WTC11 (cell line): ENCODE measurements at regions of chr19 and their contacts with region 1.

Region 1: DNA sequence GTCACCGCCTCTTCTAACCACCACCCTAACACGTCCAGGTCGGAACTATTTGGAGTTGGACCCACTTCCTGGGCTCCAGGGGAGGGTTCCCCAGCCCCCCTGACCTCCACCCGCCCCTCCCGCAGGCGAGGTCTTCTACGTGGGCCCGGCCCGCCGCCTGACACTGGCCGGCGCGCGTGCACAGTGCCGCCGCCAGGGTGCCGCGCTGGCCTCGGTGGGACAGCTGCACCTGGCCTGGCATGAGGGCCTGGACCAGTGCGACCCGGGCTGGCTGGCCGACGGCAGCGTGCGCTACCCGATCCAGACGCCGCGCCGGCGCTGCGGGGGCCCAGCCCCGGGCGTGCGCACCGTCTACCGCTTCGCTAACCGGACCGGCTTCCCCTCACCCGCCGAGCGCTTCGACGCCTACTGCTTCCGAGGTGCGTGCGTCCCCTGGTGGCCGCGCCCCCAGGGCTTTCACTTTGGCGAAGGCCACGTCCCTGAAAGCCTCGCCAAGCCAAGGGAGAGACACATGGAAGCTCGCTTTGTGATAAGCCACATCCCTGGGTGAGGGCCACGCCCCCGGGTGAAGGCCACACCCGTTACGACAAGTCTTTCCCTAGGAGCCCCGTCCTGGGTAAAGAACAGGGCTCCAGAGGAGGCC is 13.2 kb downstream of the NCAN start:
- DNase-seq: peak; percentile 90
- ATAC-seq: peak; percentile 86
- H3K4me3 Mint-ChIP-seq: peak overlapping the region; percentile 65
- H3K27ac Mint-ChIP-seq: no peak overlapping the region
- H3K4me1 Mint-ChIP-seq: peaks cover 2% of the 10 kb centered on the region
- H3K27me3 Mint-ChIP-seq: peaks cover 46% of the 10 kb centered on the region
- CTCF ChIP-seq: 0 out of 2 replicates have a peak, but pooled peaks have one; percentile 35

Region 2: DNA sequence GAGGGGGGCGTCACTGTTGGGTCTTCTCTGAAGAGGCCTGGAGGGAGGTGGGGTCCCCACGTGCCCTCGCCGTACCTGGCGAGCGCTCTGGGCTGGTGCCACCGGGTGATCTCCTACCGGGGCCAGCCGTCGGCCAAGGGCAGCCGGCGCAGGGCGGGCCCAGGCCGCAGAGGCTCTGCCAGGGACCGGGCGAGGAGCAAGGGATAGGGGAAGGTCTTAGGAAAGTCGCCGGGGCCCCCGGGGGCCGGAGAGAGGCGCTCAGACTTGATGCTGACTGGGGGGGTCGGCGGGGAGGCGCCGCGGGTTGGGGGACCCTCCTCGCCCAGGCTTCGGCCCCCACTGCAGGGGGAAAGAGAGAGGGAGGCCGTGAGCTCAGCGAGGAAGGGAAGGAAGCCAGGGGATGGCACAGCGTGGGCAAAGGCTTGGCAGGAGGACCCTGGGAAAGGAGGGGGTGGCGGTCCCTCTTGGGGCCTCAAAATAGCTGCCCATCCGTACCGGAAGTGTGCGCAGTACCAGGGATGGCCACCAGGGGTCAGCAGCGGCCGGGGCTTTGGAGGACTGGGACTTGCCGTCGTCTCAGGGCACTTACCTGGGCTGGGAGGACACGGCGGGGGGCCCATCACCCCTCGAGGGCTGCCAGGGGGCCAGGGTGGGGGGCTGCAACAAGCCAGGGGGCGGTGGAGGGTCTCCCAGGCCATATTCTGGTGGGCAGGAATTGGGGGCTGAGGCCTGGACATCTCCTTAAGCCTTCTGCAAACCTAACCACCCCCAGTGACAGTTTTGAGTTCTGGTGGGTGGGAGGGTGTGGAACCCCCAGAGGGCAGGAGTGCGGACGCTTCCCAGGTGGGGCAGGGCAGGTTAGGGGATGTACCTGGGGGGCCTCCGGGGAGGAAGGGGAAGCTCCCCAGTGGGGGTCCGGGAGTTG is 79.0 kb before region 1 on chr19:
- CTCF ChIA-PET with region 1: interaction called, 13 read pairs
- POLR2A ChIA-PET with region 1: no interaction called
- DNase-seq: peak; percentile 94
- ATAC-seq: peak; percentile 83
- H3K4me3 Mint-ChIP-seq: no peak overlapping the region
- H3K27ac Mint-ChIP-seq: no peak overlapping the region
- H3K4me1 Mint-ChIP-seq: no peaks in the 10 kb centered on the region
- H3K27me3 Mint-ChIP-seq: peaks cover 31% of the 10 kb centered on the region
- CTCF ChIP-seq: peak; percentile 98

Region 3: DNA sequence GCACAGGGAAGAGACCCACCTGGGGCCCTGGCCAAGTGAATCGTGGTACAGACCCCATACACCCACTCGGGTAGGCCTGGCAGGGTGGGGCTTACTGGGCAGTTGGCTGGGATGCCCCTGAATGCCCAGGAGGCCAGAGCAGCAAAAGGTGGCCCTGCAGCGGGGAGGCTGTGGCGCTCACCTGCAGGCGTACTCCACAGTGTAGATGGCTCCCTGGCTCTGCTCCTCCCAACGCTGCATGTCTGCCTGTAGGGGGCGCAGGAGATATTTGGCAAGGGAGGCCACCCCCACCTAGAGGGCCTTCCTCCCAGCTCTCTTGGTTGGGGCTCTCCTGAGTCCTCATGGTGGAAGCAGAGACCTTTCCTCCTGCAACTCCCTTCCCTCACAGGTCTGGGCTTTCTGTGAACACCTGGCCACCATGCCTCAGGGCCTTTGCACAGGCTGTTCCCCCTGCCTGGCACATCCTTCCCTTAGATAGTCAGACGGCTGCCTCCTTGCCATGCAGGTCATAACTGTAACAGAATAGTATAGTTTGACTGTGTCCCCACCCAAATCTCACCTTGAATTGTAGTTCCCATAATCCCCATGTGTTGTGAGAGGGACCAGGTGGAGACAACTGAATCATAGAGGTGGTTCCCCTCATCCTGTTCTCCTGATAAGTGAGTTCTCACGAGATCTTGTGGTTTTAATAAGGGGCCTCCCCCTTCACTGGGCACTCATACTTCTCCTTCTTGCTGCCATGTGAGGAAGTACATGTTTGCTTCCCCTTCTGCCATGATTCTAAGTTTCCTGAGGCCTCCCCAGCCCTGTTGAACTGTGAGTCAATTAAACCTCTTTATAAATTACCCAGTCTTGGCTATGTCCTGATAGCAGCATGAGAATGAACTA is 38.9 kb before region 1 on chr19:
- CTCF ChIA-PET with region 1: interaction called, 21 read pairs
- POLR2A ChIA-PET with region 1: no interaction called
- DNase-seq: peak; percentile 89
- ATAC-seq: peak; percentile 100
- H3K4me3 Mint-ChIP-seq: no peak overlapping the region
- H3K27ac Mint-ChIP-seq: peak overlapping the region; percentile 84
- H3K4me1 Mint-ChIP-seq: peaks cover 11% of the 10 kb centered on the region
- H3K27me3 Mint-ChIP-seq: no peaks in the 10 kb centered on the region
- CTCF ChIP-seq: peak; percentile 93

Region 4: DNA sequence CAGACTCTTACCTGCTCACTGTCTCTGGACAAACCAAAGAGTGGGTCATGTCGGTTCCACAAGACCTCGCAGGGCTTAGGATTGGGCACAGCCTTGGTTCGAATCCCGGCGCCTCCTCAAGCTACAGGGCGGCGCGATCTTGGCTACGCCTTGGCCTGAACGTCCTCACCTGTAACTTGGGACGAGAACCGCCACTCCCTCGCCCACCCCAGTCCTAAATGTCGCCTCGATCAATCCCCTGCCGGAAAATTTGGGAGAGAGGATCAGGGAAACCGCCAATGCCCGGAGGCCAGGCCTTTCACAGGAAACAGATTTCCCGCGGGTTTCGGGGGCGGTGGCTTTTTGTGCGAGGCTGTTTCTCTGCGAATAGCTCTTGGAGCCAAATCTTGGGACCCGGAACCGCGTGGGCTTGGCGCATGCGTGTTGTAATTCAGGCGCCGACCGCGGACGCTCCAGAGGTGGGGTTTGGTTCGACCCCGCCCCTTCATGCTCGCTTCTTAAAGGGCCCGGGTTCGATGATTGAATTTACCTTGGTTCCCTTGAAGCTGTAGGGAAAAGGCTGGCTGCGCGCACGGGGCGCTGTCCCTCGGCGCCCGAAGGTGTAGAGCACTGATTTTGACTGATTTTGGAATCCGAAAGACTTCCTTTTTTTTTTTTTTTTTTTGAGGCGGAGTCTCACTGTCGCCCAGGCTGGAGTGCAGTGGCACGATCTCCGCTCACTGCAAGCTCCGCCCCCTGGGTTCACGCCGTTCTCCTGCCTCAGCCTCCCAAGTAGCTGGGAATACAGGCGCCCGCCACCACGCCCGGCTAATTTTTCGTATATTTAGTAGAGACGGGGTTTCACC is 21.7 kb before region 1 on chr19 and contains the start of gene NR2C2AP:
- CTCF ChIA-PET with region 1: interaction called, 22 read pairs
- POLR2A ChIA-PET with region 1: interaction called, 6 read pairs
- DNase-seq: peak; percentile 83
- ATAC-seq: peak; percentile 87
- H3K4me3 Mint-ChIP-seq: peak within 1 kb of the TSS; percentile 88
- H3K27ac Mint-ChIP-seq: peak within 1 kb of the TSS; percentile 63; the same call in 1 of the 2 replicates
- H3K4me1 Mint-ChIP-seq: peaks cover 12% of the 10 kb centered on the region
- H3K27me3 Mint-ChIP-seq: peaks cover 47% of the 10 kb centered on the region
- CTCF ChIP-seq: no peak
- total RNA-seq, gene NR2C2AP: 22.7 to 24.9 TPM (median 23.4 TPM) in 3 replicates

Region 5: DNA sequence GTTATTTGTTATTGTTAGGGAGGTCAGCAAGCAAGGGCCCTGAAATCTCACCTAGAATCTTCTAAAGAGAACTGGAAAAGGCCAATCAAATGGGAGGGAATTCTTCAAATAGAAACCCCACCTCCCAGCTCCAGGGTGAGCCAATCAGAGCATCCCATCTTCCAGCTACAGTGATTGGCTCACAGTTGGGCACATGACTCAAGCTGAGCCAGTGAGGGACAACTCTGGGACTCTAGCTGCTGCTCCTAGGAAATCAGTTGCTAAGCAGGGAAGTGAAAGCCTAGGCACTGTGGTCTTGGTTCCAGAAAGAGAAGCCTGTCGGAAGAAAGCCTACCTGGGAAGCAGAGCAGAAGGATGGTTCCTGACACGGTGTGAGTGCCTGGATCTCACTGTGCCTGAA is 34.8 kb after region 1 on chr19:
- CTCF ChIA-PET with region 1: interaction called, 12 read pairs
- POLR2A ChIA-PET with region 1: interaction called, 3 read pairs
- DNase-seq: peak; percentile 53
- ATAC-seq: peak; percentile 77
- H3K4me3 Mint-ChIP-seq: peak overlapping the region; percentile 45; the same call in 1 of the 2 replicates
- H3K27ac Mint-ChIP-seq: no peak overlapping the region
- H3K4me1 Mint-ChIP-seq: peaks cover 22% of the 10 kb centered on the region
- H3K27me3 Mint-ChIP-seq: peaks cover 54% of the 10 kb centered on the region
- CTCF ChIP-seq: no peak